ENCODE measurements at regions of chr22 and their contacts with region 1.

Region 1: DNA sequence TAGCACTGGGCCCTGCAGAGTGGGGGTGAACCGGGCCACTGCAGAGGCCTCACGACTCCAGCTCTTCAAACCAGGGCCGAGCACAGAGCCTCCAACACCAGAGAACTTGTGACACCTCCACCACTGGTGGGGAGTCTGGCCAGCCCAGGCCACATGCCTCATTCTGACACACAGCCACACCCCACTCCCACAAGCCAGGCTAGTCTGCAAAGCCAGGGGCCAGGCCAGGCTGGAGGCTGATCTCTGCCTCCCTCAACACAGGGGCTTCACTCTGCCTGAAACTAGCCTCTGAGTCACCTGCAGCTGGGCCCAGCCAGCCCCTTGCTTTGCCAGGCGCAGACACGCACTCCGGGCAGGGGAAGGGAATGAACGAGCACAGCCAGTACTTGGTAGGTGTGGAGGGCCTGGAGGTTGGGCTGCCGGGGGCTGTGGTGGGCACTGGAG is 102.9 kb downstream of the MED15 start:
- DNase-seq: no peak

Region 2: DNA sequence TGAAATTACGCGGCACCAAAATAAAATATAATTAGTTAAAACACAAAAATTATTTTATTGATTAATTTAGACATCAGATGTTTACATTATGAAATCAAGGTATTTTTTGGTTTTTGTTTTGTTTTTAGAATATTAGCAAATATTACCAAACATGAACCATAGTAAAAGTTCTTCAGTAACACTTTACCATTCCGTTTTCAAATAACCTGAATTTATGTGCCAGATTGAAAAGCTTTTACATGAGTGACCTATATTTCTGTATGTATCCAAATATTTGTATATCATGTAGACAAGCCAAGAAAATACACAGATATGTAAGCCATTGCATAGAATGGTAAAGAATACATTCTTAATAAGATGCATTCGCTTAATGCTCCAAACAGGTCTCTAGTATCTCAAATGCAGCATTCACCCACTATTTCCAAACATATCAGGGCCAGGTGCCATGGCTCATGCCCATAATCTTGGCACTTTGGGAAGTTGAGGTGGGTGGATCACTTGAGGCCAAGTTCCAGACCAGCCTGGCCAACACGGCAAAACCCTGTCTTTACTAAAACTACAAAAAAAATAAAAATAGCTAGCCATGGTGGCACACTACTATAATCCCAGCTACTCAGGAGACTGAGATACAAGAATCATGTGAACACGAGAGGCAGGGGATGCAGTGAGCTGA is 61.3 kb after region 1 on chr22:
- intact Hi-C with region 1: loop called (anchors 10 kb)
- DNase-seq: no peak

Measured in head of caudate nucleus (tissue), 42 donors.